ENCODE measurements at regions of chr3 and their contacts with region 1.

Region 1: DNA sequence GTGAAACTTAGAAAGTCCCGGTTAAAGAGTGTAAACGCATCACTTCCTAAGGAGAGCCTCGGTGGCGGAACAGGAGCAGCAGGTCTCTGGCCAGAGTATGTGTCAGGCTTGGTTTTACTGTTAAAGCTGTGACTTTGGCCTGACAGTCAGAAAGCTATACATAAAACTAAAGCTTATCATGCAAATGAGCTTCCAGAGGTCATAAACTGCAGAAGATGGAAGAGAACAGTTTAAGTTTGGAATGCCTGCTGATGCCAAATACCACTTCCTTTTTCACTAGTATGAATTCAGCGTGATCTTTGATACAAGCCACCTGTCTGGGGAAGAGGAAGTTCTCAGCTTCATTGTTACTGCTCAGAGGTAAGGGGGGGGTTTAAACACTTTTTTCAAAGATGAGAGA is 125.1 kb upstream of the CTDSPL start:
- DNase-seq: no peak
- ATAC-seq: no peak
- H3K4me3 ChIP-seq: no peak overlapping the region
- H3K27ac ChIP-seq: peak overlapping the region in 7 of 12 donors; percentile 4 to 69 (median 21)
- H3K4me1 ChIP-seq: peaks cover 3 to 57% (median 27%) of the 10 kb centered on the region in 12 donors
- H3K27me3 ChIP-seq: no peaks in the 10 kb centered on the region
- CTCF ChIP-seq: no peak
- POLR2A ChIP-seq: no peak

Region 2: DNA sequence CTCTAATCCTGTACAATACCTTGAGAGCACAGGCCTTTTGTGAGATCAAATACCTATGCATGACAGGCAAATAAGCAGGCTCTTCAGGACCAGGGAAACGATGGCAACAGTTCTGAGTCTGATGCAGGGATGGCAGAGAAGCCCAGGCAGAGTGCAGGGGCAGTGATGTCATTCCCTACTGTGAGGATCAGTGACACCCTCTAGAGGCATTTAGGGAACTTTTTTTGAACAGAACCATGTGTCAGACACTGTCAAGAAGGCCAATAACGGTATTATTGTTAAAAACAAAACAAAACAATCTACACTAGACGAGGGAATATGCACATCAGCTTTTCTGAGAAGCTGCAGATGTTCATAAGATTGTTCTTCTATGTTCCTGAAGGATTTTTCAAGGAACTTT is 189.7 kb before region 1 on chr3:
- intact Hi-C with region 1: loop called in 2 of 10 experiments (anchors 2 to 5 kb)
- DNase-seq: peak in 3 of 5 donors; percentile 59 to 68 (median 59)
- ATAC-seq: peak; percentile 77 to 86 (median 84)
- H3K4me3 ChIP-seq: no peak overlapping the region
- H3K27ac ChIP-seq: peak overlapping the region in 8 of 12 donors; percentile 35 to 79 (median 61)
- H3K4me1 ChIP-seq: peaks cover 0 to 51% (median 26%) of the 10 kb centered on the region in 12 donors
- H3K27me3 ChIP-seq: no peaks in the 10 kb centered on the region
- CTCF ChIP-seq: peak; percentile 11 to 59 (median 40)
- POLR2A ChIP-seq: no peak

Region 3: DNA sequence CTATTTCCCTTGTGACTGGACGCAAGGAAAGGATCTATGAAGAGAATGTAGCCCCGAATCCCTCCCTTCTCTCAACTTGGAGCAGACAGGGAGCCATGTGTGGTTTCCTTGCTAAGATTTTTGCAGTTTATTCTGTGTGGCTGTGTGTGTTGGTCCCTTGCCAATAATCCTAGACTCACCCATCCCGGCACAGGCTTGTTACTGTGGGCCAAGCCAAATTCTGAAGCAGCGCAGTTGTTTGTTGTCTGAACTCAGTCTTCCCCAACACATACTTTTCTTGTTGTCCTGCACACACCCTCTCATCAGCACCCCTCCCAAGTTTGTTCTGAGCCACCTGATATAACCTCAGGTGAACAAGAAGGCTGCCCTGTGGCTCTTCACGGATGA is 68.2 kb before region 1 on chr3:
- intact Hi-C with region 1: loop called in 1 of 10 experiments (anchors 5 kb)
- DNase-seq: peak in 2 of 5 donors; percentile 42 to 51
- ATAC-seq: peak; percentile 30 to 66 (median 48)
- H3K4me3 ChIP-seq: no peak overlapping the region
- H3K27ac ChIP-seq: peak overlapping the region in 11 of 12 donors; percentile 15 to 86 (median 63)
- H3K4me1 ChIP-seq: peaks cover 0 to 60% (median 37%) of the 10 kb centered on the region in 12 donors
- H3K27me3 ChIP-seq: no peaks in the 10 kb centered on the region
- CTCF ChIP-seq: no peak
- POLR2A ChIP-seq: no peak

Region 4: GRCh38 chr3:37680401-37680800 is 56.2 kb before region 1 on chr3:
- intact Hi-C with region 1: loop called in 1 of 10 experiments (anchors 5 kb)
- DNase-seq: no peak
- ATAC-seq: peak; percentile 62 to 88 (median 82)
- H3K4me3 ChIP-seq: no peak overlapping the region
- H3K27ac ChIP-seq: peak overlapping the region in 10 of 12 donors; percentile 12 to 71 (median 53)
- H3K4me1 ChIP-seq: peaks cover 0 to 23% (median 11%) of the 10 kb centered on the region in 12 donors
- H3K27me3 ChIP-seq: no peaks in the 10 kb centered on the region
- CTCF ChIP-seq: no peak
- POLR2A ChIP-seq: no peak